AG04450 (cell line): ENCODE measurements at regions of chr1 and their contacts with region 1.

Region 1: DNA sequence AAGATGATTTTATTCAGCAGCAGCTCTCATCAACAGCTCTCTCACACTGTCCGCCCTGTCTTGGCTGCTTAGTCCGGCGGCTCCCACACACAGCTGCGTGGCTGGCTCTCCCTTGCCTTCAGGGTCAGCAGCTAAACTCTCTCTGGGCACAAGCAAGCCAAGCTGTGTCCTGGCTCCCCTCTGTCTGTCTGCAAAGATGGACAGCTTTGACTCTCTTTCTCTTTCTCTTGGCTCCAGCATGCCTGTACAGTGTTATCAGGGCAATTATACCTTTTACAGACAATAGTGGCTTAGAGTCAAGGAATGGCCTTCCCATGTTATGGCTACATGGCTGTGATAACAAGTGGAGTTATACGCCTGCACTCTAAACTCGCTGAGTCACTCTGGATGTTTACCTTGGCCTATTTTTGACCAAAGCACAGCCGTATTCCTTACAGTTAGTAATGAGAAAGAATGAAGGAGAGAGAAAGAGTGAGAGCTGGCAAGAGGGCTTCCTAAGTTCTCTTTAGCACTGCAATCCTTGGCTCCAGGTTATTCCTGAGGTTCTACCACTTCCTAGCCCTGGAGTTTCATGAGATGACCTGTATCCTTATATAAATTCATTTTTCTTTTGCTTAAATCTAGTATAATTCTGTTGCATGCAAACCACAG is 59.9 kb upstream of the ZSWIM5 start:
- DNase-seq: peak; percentile 54
- H3K4me3 ChIP-seq: no peak overlapping the region
- H3K27ac ChIP-seq: peak overlapping the region; percentile 93
- H3K27me3 ChIP-seq: no peaks in the 10 kb centered on the region
- CTCF ChIP-seq: no peak

Region 2: DNA sequence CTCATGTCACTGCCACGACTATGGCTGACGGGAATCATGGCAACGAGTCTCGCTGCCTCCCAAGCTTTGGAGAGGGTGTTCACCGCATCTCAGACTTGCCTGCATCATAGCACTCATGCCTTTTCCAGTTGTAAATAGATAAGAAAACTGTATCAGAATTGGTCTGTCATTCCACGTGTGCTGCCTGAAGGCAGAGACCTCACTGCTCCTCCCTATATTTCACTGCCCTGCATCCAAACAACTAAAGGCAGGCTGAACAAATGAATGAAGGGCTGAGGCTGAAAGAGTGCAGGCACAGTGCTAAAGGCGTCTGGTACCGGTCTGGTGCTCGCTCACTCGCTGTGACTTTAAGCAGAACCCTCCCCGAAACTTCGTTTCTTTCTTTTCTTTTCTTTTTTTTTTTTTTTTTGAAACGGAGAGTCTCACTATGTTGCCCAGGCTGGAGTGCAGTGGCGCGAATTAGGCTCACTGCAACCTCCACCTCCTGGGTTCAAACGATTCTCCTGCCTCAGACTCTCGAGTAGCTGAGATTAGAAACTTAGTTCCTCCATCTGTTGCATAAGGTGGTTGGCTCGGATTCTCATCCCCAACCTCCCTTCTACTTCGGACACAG is 280.4 kb before region 1 on chr1:
- CTCF ChIA-PET with region 1: no interaction called
- POLR2A ChIA-PET with region 1: no interaction called
- DNase-seq: peak; percentile 4
- H3K4me3 ChIP-seq: peak overlapping the region; percentile 99
- H3K27ac ChIP-seq: peak overlapping the region; percentile 65
- H3K27me3 ChIP-seq: no peaks in the 10 kb centered on the region
- CTCF ChIP-seq: no peak

Region 3: GRCh38 chr1:45071567-45071966 is 194.7 kb before region 1 on chr1:
- CTCF ChIA-PET with region 1: interaction called, 13 read pairs
- POLR2A ChIA-PET with region 1: no interaction called
- DNase-seq: no peak
- H3K4me3 ChIP-seq: no peak overlapping the region
- H3K27ac ChIP-seq: no peak overlapping the region
- H3K27me3 ChIP-seq: no peaks in the 10 kb centered on the region
- CTCF ChIP-seq: no peak

Region 4: GRCh38 chr1:45177452-45177851 is 88.8 kb before region 1 on chr1:
- CTCF ChIA-PET with region 1: no interaction called
- POLR2A ChIA-PET with region 1: no interaction called
- DNase-seq: no peak
- H3K4me3 ChIP-seq: no peak overlapping the region
- H3K27ac ChIP-seq: no peak overlapping the region
- H3K27me3 ChIP-seq: peaks cover 2% of the 10 kb centered on the region
- CTCF ChIP-seq: no peak